ENCODE measurements at regions of chr3 and their contacts with region 1.

Region 1: GRCh38 chr3:11221818-11222415 is 50.3 kb upstream of the ATG7 start:
- DNase-seq: no peak
- H3K4me3 ChIP-seq: no peak overlapping the region
- H3K27ac ChIP-seq: no peak overlapping the region
- H3K27me3 ChIP-seq: no peaks in the 10 kb centered on the region
- CTCF ChIP-seq: peak; percentile 23; the same call in 1 of the 2 replicates

Region 2: GRCh38 chr3:11415099-11415498 is 193.2 kb after region 1 on chr3:
- CTCF ChIA-PET with region 1: no interaction called
- POLR2A ChIA-PET with region 1: no interaction called
- DNase-seq: no peak
- H3K4me3 ChIP-seq: no peak overlapping the region
- H3K27ac ChIP-seq: no peak overlapping the region
- H3K27me3 ChIP-seq: no peaks in the 10 kb centered on the region
- CTCF ChIP-seq: no peak

Region 3: GRCh38 chr3:12235691-12236090 is 1013.8 kb after region 1 on chr3:
- CTCF ChIA-PET with region 1: interaction called, 12 read pairs
- POLR2A ChIA-PET with region 1: no interaction called
- DNase-seq: no peak
- H3K4me3 ChIP-seq: peak overlapping the region; percentile 45
- H3K27ac ChIP-seq: peak overlapping the region; percentile 58
- H3K27me3 ChIP-seq: no peaks in the 10 kb centered on the region
- CTCF ChIP-seq: no peak

Measured in AG04450 (cell line).